Activated CD8-positive, alpha-beta T cell treated with anti-CD3 and anti-CD28 coated beads for 36 hours (primary cell): ENCODE measurements at regions of chr15 and their contacts with region 1.

Region 1: DNA sequence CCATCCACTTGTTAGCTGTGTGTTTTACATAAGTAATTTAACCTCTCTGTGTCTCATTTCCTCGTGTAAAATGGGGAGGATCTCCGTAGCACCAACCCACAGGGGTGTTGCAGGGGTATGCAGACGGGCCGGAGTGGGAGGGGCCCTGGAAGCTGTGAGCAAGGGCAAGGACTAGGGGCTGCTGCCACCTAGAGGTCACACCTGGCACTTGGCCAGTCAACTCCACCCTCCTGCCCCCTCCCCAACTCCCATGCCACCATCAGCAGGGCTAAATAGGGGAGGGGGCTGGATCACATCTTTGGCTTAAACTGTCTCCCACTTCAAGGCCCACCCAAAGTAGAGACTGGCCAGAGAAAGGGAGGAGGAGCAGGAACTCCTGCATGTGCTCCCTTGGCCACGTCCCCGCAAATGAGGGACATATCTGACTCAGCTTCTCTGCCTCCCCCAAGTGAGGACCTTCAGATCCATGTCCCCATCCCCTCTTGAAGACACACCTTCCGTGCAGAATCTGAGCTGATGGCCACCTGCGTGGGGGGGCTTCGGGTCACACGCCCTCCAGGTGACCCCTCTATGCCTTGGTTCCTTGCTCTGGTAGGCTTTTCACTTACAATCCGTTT is 2.6 kb downstream of the CCDC9B start:
- DNase-seq: peak; percentile 88
- ATAC-seq: peak; percentile 96
- H3K4me3 Mint-ChIP-seq: no peak overlapping the region
- H3K27ac Mint-ChIP-seq: no peak overlapping the region
- H3K4me1 Mint-ChIP-seq: peaks cover 14% of the 10 kb centered on the region
- H3K27me3 Mint-ChIP-seq: no peaks in the 10 kb centered on the region
- CTCF ChIP-seq: peak; percentile 92

Region 2: DNA sequence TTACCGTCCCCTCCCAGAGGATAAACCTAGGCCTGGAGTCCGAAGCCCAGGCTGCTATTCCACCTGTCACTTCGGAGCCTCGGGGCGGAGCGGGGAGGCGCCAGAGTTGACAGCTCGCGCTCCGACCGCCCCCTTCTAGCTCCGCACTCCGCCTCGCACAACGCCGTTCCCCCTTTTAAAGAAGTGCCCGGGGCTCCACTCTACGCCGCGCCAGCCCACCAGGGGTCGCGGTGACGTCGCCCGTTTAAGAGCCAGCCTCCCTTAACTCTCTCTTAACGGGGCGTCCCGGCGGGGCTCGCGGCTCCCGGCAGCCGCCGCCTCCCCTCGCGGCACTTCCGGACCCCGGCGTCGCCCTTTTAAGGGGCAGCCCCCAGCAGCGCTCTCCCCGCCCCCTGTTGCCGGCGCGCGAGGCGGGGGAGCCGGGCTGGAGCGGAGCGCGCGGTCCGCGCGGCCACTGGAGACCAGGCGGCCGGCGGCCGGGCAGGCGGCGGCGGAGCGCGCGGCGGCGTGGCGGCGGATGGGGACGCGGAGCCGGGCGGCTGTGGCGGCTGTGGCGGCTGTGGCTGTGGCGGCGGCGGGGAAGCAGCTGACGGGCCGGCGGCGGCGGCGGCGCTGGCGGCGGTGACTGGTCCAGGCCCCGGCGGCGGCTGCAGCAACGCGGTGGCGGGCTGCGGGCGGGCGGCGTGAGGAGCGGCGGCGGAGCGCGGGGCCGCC is 14.8 kb before region 1 on chr15 and contains the start of gene INAFM2:
- CTCF ChIA-PET with region 1: interaction called, 376 read pairs
- POLR2A ChIA-PET with region 1: interaction called, 6 read pairs
- intact Hi-C with region 1: no loop called
- DNase-seq: peak; percentile 95
- ATAC-seq: peak; percentile 94
- H3K4me3 Mint-ChIP-seq: peak within 1 kb of the TSS; percentile 71
- H3K27ac Mint-ChIP-seq: no peak within 1 kb of the TSS
- H3K4me1 Mint-ChIP-seq: peaks cover 31% of the 10 kb centered on the region
- H3K27me3 Mint-ChIP-seq: no peaks in the 10 kb centered on the region
- CTCF ChIP-seq: peak; percentile 64
- total RNA-seq, gene INAFM2: 15.0 to 16.9 TPM

Region 3: GRCh38 chr15:40357723-40358470 is 19.7 kb after region 1 on chr15 and contains the start of gene DISP2:
- CTCF ChIA-PET with region 1: interaction called, 71 read pairs
- POLR2A ChIA-PET with region 1: interaction called, 4 read pairs
- intact Hi-C with region 1: no loop called
- DNase-seq: peak; percentile 87
- ATAC-seq: peak; percentile 94
- H3K4me3 Mint-ChIP-seq: peak within 1 kb of the TSS; percentile 71
- H3K27ac Mint-ChIP-seq: no peak within 1 kb of the TSS
- H3K4me1 Mint-ChIP-seq: peaks cover 7% of the 10 kb centered on the region
- H3K27me3 Mint-ChIP-seq: no peaks in the 10 kb centered on the region
- CTCF ChIP-seq: no peak
- total RNA-seq, gene DISP2: 0.09 to 0.20 TPM

Region 4: GRCh38 chr15:40389842-40390595 is 51.9 kb after region 1 on chr15:
- CTCF ChIA-PET with region 1: no interaction called
- POLR2A ChIA-PET with region 1: no interaction called
- intact Hi-C with region 1: no loop called
- DNase-seq: no peak
- ATAC-seq: no peak
- H3K4me3 Mint-ChIP-seq: no peak overlapping the region
- H3K27ac Mint-ChIP-seq: peak overlapping the region; percentile 18
- H3K4me1 Mint-ChIP-seq: peaks cover 2% of the 10 kb centered on the region
- H3K27me3 Mint-ChIP-seq: no peaks in the 10 kb centered on the region
- CTCF ChIP-seq: no peak

Region 5: DNA sequence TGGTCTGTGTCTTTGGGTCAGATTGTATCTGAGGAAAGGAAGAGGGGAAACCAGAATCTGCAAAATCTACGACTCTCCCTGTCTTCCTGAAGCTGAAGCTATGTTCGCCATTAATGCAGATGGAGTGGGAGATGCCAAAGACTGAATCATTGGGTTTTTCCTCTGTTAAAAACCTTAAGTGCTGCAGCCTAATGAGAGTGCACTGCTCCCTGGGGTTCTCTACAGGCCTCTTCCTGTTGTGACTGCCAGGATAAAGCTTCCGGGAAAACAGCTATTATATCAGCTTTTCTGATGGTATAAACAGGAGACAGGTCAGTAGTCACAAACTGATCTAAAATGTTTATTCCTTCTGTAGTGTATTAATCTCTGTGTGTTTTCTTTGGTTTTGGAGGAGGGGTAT is 392.9 kb after region 1 on chr15:
- CTCF ChIA-PET with region 1: no interaction called
- POLR2A ChIA-PET with region 1: no interaction called
- intact Hi-C with region 1: no loop called
- DNase-seq: no peak
- ATAC-seq: no peak
- H3K4me3 Mint-ChIP-seq: no peak overlapping the region
- H3K27ac Mint-ChIP-seq: no peak overlapping the region
- H3K4me1 Mint-ChIP-seq: peaks cover 2% of the 10 kb centered on the region
- H3K27me3 Mint-ChIP-seq: no peaks in the 10 kb centered on the region
- CTCF ChIP-seq: no peak